CD4-positive, alpha-beta memory T cell (primary cell): ENCODE measurements at regions of chr1 and their contacts with region 1.

Region 1: GRCh38 chr1:40338745-40339424 is 21.8 kb upstream of the COL9A2 start:
- DNase-seq: peak; percentile 86 to 89 (median 87)
- H3K4me3 ChIP-seq: no peak overlapping the region
- H3K4me3 Mint-ChIP-seq: peak overlapping the region; percentile 0 to 62 (median 50)
- H3K27ac ChIP-seq: no peak overlapping the region
- H3K27ac Mint-ChIP-seq: peak overlapping the region in 6 of 7 donors; percentile 1 to 94 (median 58)
- H3K4me1 ChIP-seq: peaks cover 31% of the 10 kb centered on the region
- H3K4me1 Mint-ChIP-seq: peaks cover 20 to 42% (median 31%) of the 10 kb centered on the region in 4 donors
- H3K27me3 ChIP-seq: no peaks in the 10 kb centered on the region
- H3K27me3 Mint-ChIP-seq: no peaks in the 10 kb centered on the region

Region 2: GRCh38 chr1:40153073-40153770 is 185.7 kb before region 1 on chr1:
- CTCF ChIA-PET with region 1: interaction called, 278 read pairs
- POLR2A ChIA-PET with region 1: interaction called, 19 read pairs
- intact Hi-C with region 1: loop called (anchors 1 kb)
- DNase-seq: peak; percentile 38 to 58 (median 53)
- H3K4me3 ChIP-seq: no peak overlapping the region
- H3K4me3 Mint-ChIP-seq: peak overlapping the region in 5 of 8 donors; percentile 12 to 36 (median 26)
- H3K27ac ChIP-seq: no peak overlapping the region
- H3K27ac Mint-ChIP-seq: peak overlapping the region in 6 of 7 donors; percentile 25 to 77 (median 56)
- H3K4me1 ChIP-seq: no peaks in the 10 kb centered on the region
- H3K4me1 Mint-ChIP-seq: peaks cover 4 to 10% (median 5%) of the 10 kb centered on the region in 4 donors
- H3K27me3 ChIP-seq: no peaks in the 10 kb centered on the region
- H3K27me3 Mint-ChIP-seq: peaks cover 2 to 10% of the 10 kb centered on the region in 2 donors

Region 3: DNA sequence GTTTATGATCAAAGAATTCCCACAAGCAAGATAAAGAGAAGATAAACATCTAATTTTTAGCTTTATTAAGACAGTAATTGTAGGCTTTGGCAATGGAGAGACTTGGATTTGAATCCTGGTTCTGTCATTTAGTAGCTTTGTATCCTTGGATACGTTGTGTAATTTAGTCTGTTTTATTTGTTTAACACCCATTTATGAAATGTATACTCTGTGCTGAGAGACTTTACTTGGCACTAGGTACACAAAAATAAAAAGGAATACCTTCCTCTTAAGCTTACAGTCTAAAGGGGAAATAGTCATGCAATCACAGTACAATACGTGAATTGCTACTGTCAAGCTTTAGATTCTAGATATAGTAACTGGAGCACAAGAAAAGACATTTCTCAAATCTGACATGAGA is 57.0 kb before region 1 on chr1:
- CTCF ChIA-PET with region 1: interaction called, 11 read pairs
- POLR2A ChIA-PET with region 1: no interaction called
- intact Hi-C with region 1: no loop called
- DNase-seq: no peak
- H3K4me3 ChIP-seq: no peak overlapping the region
- H3K4me3 Mint-ChIP-seq: no peak overlapping the region
- H3K27ac ChIP-seq: no peak overlapping the region
- H3K27ac Mint-ChIP-seq: no peak overlapping the region
- H3K4me1 ChIP-seq: no peaks in the 10 kb centered on the region
- H3K4me1 Mint-ChIP-seq: peaks cover 0 to 14% (median 5%) of the 10 kb centered on the region in 4 donors
- H3K27me3 ChIP-seq: no peaks in the 10 kb centered on the region
- H3K27me3 Mint-ChIP-seq: no peaks in the 10 kb centered on the region

Region 4: GRCh38 chr1:40353082-40353481 is 14.2 kb after region 1 on chr1:
- CTCF ChIA-PET with region 1: interaction called, 17 read pairs
- POLR2A ChIA-PET with region 1: no interaction called
- intact Hi-C with region 1: no loop called
- DNase-seq: no peak
- H3K4me3 ChIP-seq: no peak overlapping the region
- H3K4me3 Mint-ChIP-seq: no peak overlapping the region
- H3K27ac ChIP-seq: no peak overlapping the region
- H3K27ac Mint-ChIP-seq: peak overlapping the region in 1 of 7 donors; percentile 35
- H3K4me1 ChIP-seq: no peaks in the 10 kb centered on the region
- H3K4me1 Mint-ChIP-seq: peaks cover 0 to 1% (median 0%) of the 10 kb centered on the region in 4 donors
- H3K27me3 ChIP-seq: no peaks in the 10 kb centered on the region
- H3K27me3 Mint-ChIP-seq: no peaks in the 10 kb centered on the region

Region 5: DNA sequence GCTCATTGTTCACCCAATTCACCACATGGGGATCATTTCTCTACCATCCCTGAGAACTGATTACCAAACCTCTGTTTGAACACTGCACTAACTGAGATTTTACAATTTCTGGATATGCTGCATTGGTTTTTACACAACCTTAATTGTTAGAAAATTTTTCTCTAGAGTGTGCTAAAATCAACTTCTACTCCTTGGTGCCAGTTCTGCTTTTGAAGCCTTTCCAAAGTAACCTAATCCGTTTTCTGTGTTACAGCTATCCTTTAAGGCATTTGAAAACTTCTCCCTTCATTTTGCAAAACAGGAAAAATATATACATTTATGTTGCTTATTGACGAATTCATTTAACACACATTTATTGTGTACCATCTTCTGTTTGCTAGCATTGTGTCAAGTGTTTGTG is 58.4 kb after region 1 on chr1:
- CTCF ChIA-PET with region 1: interaction called, 87 read pairs
- POLR2A ChIA-PET with region 1: interaction called, 4 read pairs
- intact Hi-C with region 1: no loop called
- DNase-seq: no peak
- H3K4me3 ChIP-seq: peak overlapping the region in 1 of 2 donors; percentile 1
- H3K4me3 Mint-ChIP-seq: peak overlapping the region; percentile 1 to 77 (median 60)
- H3K27ac ChIP-seq: peak overlapping the region; percentile 45
- H3K27ac Mint-ChIP-seq: peak overlapping the region; percentile 83 to 95 (median 91)
- H3K4me1 ChIP-seq: peaks cover 98% of the 10 kb centered on the region
- H3K4me1 Mint-ChIP-seq: peaks cover 73 to 96% (median 84%) of the 10 kb centered on the region in 4 donors
- H3K27me3 ChIP-seq: no peaks in the 10 kb centered on the region
- H3K27me3 Mint-ChIP-seq: no peaks in the 10 kb centered on the region

Region 6: DNA sequence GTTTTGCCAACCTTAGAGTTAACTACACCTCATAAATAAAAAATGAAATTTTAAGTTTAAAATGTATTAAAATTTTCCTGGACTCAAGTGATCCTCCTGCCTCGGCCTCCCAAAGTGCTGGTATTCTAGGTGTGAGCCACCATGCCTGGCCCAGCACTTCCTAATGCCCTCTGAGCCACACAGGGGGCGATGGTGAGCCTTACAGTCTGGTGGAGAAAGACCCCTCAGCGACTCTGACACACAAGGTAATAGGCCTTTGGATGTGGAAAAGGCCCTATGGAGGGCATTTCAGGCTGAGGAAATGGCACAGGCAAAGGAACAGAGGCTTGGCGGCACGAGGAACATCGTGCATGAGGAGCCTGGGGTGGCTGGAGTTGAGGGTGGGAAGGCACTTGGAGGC is 516.6 kb after region 1 on chr1:
- CTCF ChIA-PET with region 1: no interaction called
- POLR2A ChIA-PET with region 1: no interaction called
- intact Hi-C with region 1: no loop called
- DNase-seq: no peak
- H3K4me3 ChIP-seq: no peak overlapping the region
- H3K4me3 Mint-ChIP-seq: no peak overlapping the region
- H3K27ac ChIP-seq: no peak overlapping the region
- H3K27ac Mint-ChIP-seq: peak overlapping the region in 1 of 7 donors; percentile 31
- H3K4me1 ChIP-seq: no peaks in the 10 kb centered on the region
- H3K4me1 Mint-ChIP-seq: peaks cover 0 to under 1% (median 0%) of the 10 kb centered on the region in 4 donors
- H3K27me3 ChIP-seq: no peaks in the 10 kb centered on the region
- H3K27me3 Mint-ChIP-seq: no peaks in the 10 kb centered on the region